T-cell (primary cell): ENCODE measurements at regions of chr17 and their contacts with region 1.

Region 1: GRCh38 chr17:40113110-40113906 is 8.5 kb upstream of the MSL1 start:
- DNase-seq: peak; percentile 81 to 96 (median 91)
- ATAC-seq: peak; percentile 77 to 86 (median 79)
- H3K4me3 ChIP-seq: peak overlapping the region; percentile 41 to 43
- H3K4me3 Mint-ChIP-seq: peak overlapping the region; percentile 66 to 82 (median 82)
- H3K27ac ChIP-seq: peak overlapping the region; percentile 66
- H3K27ac Mint-ChIP-seq: peak overlapping the region; percentile 93 to 94
- H3K4me1 ChIP-seq: peaks cover 46 to 57% of the 10 kb centered on the region in 2 experiments
- H3K4me1 Mint-ChIP-seq: peaks cover 55 to 57% (median 57%) of the 10 kb centered on the region in 3 donors
- H3K27me3 ChIP-seq: no peaks in the 10 kb centered on the region
- H3K27me3 Mint-ChIP-seq: no peaks in the 10 kb centered on the region

Region 2: GRCh38 chr17:40086150-40087044 is 26.9 kb before region 1 on chr17:
- CTCF ChIA-PET with region 1: interaction called in 1 of 2 experiments, 10 read pairs
- POLR2A ChIA-PET with region 1: no interaction called
- DNase-seq: peak in 27 of 35 experiments; percentile 38 to 75 (median 57)
- ATAC-seq: peak; percentile 33 to 79 (median 60)
- H3K4me3 ChIP-seq: no peak overlapping the region
- H3K4me3 Mint-ChIP-seq: no peak overlapping the region
- H3K27ac ChIP-seq: no peak overlapping the region
- H3K27ac Mint-ChIP-seq: peak overlapping the region; percentile 15 to 72
- H3K4me1 ChIP-seq: peaks cover 0 to 12% of the 10 kb centered on the region in 2 experiments
- H3K4me1 Mint-ChIP-seq: peaks cover 15 to 17% (median 16%) of the 10 kb centered on the region in 3 donors
- H3K27me3 ChIP-seq: peaks cover 0 to 2% of the 10 kb centered on the region in 2 experiments
- H3K27me3 Mint-ChIP-seq: no peaks in the 10 kb centered on the region

Region 3: DNA sequence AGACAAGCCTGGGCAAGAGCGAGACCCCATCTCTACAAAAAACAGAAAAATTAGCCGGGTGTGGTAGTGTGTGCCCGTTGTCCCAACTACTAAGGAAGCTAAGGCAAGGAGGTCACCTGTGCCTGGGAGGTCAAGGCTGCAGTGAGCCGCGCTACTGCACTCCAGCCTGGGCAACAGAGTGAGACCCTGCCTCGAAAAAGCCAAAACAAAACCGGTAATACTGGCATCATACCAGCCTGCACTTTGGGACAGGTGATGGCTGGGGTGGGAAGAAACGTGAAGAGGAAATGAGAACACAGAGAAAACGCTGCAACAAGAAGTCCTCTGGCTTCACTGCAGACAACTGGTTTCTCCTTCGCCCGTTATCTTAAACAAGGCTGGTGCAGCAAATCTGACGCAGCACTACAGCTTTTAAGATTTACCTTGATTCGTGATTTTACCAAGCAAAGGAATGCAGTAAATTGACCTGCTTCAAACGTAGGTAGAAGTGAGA is 26.3 kb after region 1 on chr17:
- CTCF ChIA-PET with region 1: interaction called, 10 to 36 read pairs
- POLR2A ChIA-PET with region 1: interaction called, 4 to 8 read pairs
- DNase-seq: peak in 1 of 35 experiments; percentile 15
- ATAC-seq: peak in 3 of 4 experiments; percentile 5 to 6 (median 5)
- H3K4me3 ChIP-seq: peak overlapping the region; percentile 60 to 78
- H3K4me3 Mint-ChIP-seq: peak overlapping the region; percentile 89 to 92 (median 89)
- H3K27ac ChIP-seq: peak overlapping the region; percentile 94
- H3K27ac Mint-ChIP-seq: peak overlapping the region; percentile 96 to 98
- H3K4me1 ChIP-seq: peaks cover 12 to 35% of the 10 kb centered on the region in 2 experiments
- H3K4me1 Mint-ChIP-seq: peaks cover 30 to 44% (median 41%) of the 10 kb centered on the region in 3 donors
- H3K27me3 ChIP-seq: no peaks in the 10 kb centered on the region
- H3K27me3 Mint-ChIP-seq: no peaks in the 10 kb centered on the region

Region 4: DNA sequence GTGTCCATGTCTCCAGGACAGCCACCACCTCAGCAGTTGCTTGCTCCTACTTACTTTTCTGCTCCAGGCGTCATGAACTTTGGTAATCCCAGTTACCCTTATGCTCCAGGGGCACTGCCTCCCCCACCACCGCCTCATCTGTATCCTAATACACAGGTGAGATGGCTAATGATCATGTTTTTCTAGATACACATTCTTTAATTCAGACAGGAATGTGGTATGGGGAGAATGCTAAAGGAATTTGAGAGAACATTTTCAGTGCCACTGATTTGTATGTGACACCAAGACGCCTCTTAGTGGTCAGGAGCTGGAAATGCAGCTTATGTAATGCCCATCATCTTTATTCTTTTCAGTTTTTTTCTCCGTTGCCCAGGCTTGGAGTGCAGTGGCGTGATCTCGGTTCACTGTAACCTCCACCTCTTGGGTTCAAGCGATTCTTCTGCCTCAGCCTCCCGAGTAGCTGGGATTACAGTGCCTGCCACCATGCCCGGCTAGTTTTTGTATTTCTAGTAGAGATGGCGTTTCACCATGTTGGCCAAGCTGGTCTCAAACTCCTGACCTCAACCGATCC is 55.0 kb after region 1 on chr17:
- CTCF ChIA-PET with region 1: interaction called, 8 to 72 read pairs
- POLR2A ChIA-PET with region 1: interaction called in 1 of 2 experiments, 5 read pairs
- DNase-seq: peak in 25 of 35 experiments; percentile 6 to 78 (median 31)
- ATAC-seq: peak; percentile 60 to 79 (median 72)
- H3K4me3 ChIP-seq: no peak overlapping the region
- H3K4me3 Mint-ChIP-seq: no peak overlapping the region
- H3K27ac ChIP-seq: peak overlapping the region; percentile 35
- H3K27ac Mint-ChIP-seq: peak overlapping the region; percentile 65 to 78
- H3K4me1 ChIP-seq: peaks cover 0 to 3% of the 10 kb centered on the region in 2 experiments
- H3K4me1 Mint-ChIP-seq: peaks cover 5 to 15% (median 13%) of the 10 kb centered on the region in 3 donors
- H3K27me3 ChIP-seq: no peaks in the 10 kb centered on the region
- H3K27me3 Mint-ChIP-seq: no peaks in the 10 kb centered on the region

Region 5: DNA sequence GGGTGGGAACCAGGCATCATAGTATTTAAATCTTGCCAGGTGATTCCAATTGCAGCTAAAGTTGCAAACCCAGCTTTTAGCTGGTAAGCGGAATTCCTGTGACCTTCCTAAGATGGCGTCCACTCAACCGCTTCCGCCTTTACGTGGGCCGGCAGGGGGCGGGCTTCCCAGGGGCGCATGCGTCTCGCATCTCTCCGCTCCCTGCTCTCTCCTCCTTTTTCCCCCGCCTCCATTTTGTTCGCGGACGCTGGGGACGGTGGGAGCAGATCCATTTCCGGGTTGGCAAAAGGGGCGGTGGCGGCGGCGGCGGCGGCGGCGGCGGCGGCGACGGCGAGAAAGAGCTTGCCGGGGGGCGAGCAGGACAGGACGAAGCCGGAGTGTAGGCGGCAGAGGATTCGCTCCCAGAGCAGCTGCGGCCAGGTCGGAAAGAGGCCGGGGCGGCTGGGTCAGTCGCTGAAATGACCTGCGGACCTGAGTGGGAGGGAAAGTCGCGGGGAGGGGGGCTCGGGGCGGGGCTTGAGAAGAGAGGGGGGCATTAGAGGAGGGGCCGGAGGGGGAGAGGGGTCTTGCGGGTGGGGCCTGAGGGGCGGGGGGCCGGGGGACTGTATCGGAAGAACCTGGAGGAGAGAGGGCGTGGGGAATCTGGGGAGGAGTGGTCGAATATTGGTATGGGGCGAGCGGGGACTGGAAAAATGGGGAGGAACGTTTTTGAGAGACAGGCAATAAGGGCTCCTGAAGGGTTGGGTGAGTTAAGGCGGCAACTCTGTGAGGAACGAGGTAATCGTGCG is 106.0 kb after region 1 on chr17 and contains the start of gene WIPF2:
- CTCF ChIA-PET with region 1: interaction called in 1 of 2 experiments, 13 read pairs
- POLR2A ChIA-PET with region 1: no interaction called
- DNase-seq: peak; percentile 91 to 98 (median 94)
- ATAC-seq: peak; percentile 91 to 99 (median 97)
- H3K4me3 ChIP-seq: peak within 1 kb of the TSS; percentile 50 to 71
- H3K4me3 Mint-ChIP-seq: peak within 1 kb of the TSS; percentile 87 to 98 (median 95)
- H3K27ac ChIP-seq: peak within 1 kb of the TSS; percentile 92
- H3K27ac Mint-ChIP-seq: peak within 1 kb of the TSS; percentile 100
- H3K4me1 ChIP-seq: peaks cover 8 to 24% of the 10 kb centered on the region in 2 experiments
- H3K4me1 Mint-ChIP-seq: peaks cover 26 to 42% (median 31%) of the 10 kb centered on the region in 3 donors
- H3K27me3 ChIP-seq: no peaks in the 10 kb centered on the region
- H3K27me3 Mint-ChIP-seq: no peaks in the 10 kb centered on the region
- total RNA-seq, gene WIPF2: 23.1 to 42.1 (median 32.1) TPM

Region 6: DNA sequence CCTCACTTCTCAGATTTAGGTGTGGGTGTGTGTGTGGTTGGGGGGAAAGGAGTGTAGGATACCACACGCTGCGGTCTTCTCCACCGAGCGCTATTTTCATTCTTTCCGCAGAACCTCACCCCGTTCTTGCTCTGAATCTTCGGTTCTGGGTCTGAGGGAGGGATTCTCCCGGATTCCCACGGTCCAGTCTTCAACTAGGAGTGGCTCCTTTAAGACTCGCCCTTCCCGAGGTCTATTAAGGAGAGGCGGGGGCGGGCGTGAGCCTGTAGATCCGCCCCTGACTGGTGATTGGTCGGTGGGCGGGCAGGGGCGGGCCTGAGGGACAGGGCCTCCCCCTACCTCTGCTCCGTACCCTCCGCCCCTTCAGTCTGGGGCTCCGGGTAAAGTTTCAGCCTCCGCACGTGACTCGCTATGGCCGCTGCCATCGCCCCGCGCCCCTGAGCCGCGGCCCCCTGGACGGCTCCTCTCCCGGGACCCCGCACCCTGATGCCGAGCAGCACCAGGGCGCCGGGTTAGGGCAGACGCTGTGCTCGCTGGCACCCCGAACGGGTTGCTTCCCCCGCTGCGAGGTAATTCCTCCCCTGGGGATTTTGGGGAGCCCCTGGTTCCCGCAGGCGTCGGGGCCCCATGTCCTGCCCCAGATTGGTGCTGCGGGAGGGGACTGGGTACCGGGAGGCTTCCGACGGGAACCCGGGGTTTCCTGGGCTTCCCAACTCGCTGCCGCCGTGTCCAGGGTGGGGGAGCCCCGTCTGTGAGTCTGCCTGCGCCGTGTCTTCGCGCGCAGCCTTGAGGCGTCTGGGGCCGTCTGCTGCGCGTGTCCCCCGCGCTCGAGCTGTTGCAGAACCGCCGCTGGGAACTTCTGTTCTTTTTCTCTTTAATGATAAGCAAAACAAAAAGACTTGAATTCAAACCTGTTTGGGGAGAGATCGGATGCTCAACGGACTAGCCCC is 204.8 kb after region 1 on chr17:
- CTCF ChIA-PET with region 1: no interaction called
- POLR2A ChIA-PET with region 1: no interaction called
- DNase-seq: peak; percentile 83 to 94 (median 89)
- ATAC-seq: peak; percentile 67 to 76 (median 70)
- H3K4me3 ChIP-seq: peak overlapping the region; percentile 75 to 99
- H3K4me3 Mint-ChIP-seq: peak overlapping the region; percentile 91 to 96 (median 94)
- H3K27ac ChIP-seq: peak overlapping the region; percentile 99
- H3K27ac Mint-ChIP-seq: peak overlapping the region; percentile 99 to 100
- H3K4me1 ChIP-seq: peaks cover 41 to 91% of the 10 kb centered on the region in 2 experiments
- H3K4me1 Mint-ChIP-seq: peaks cover 83 to 90% (median 83%) of the 10 kb centered on the region in 3 donors
- H3K27me3 ChIP-seq: no peaks in the 10 kb centered on the region
- H3K27me3 Mint-ChIP-seq: no peaks in the 10 kb centered on the region